GM12878 (cell line): ENCODE measurements at regions of chr3 and their contacts with region 1.

Region 1: DNA sequence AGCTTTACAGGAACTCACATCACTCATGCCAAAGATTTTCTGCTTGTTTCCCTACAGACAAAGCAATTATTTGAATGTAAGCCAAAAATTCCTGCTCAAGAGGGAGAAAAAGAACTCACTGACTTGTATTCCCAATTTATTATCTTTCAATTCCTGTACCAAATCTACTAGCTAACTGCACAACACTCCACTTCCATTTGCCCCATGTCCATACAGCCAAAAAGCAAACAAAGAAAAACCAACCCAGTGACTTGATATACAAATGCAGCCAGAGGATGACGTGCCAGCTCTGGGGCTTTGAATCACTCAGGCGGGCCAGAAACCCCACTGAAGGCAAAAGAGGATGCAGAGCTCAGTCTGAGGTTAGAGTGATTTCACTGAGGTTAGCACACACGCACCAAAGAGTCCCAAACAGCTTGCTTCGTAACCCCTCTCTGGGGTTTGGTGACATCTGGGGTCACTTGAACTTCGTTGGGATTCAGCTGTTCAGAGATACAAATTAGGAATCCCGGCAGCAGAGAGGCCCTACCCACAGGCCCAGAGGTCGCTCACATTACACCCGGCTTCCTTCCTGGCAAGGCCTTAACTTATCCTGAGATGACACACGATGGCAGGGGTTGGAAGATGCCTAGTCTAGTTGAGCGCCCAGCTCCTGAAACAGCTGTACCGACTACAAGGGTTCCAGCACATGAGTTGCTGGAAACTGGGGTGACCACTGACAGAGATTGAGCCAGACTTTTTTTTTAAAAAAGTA is 1.6 kb downstream of the RFTN1 start:
- DNase-seq: peak; percentile 98
- ATAC-seq: peak; percentile 48
- H3K4me3 ChIP-seq: peak overlapping the region; percentile 86
- H3K27ac ChIP-seq: peak overlapping the region; percentile 92
- H3K4me1 ChIP-seq: peaks cover 37% of the 10 kb centered on the region
- H3K27me3 ChIP-seq: no peaks in the 10 kb centered on the region
- CTCF ChIP-seq: peak in 1 of 3 experiments; percentile 0; a peak in 1 of 6 replicates
- EP300 ChIP-seq: peak; percentile 99
- POLR2A ChIP-seq: peak; percentile 64
- RAD21 ChIP-seq: peak; percentile 8; the same call in 1 of the 2 replicates

Region 2: GRCh38 chr3:15361494-15362212 is 1150.2 kb before region 1 on chr3:
- CTCF ChIA-PET with region 1: no interaction called
- POLR2A ChIA-PET with region 1: no interaction called
- RAD21 ChIA-PET with region 1: no interaction called
- SMC1A ChIA-PET with region 1: no interaction called
- in situ Hi-C with region 1: loop called (anchors 25 kb)
- intact Hi-C with region 1: loop called (anchors 5 kb)
- DNase-seq: peak; percentile 99
- ATAC-seq: peak; percentile 82
- H3K4me3 ChIP-seq: peak overlapping the region; percentile 40; the same call in 1 of the 2 replicates
- H3K27ac ChIP-seq: peak overlapping the region; percentile 84
- H3K4me1 ChIP-seq: peaks cover 47% of the 10 kb centered on the region
- H3K27me3 ChIP-seq: no peaks in the 10 kb centered on the region
- CTCF ChIP-seq: no peak
- EP300 ChIP-seq: peak in 1 of 2 experiments; percentile 98
- POLR2A ChIP-seq: peak; percentile 63
- RAD21 ChIP-seq: peak; percentile 2

Region 3: GRCh38 chr3:16264708-16265454 is 247.0 kb before region 1 on chr3 and contains the starts of genes DPH3 and OXNAD1:
- CTCF ChIA-PET with region 1: interaction called, 12 read pairs
- POLR2A ChIA-PET with region 1: interaction called, 8 read pairs
- RAD21 ChIA-PET with region 1: interaction called, 4 read pairs
- SMC1A ChIA-PET with region 1: interaction called, 5 read pairs
- in situ Hi-C with region 1: no loop called
- intact Hi-C with region 1: loop called (anchors 2 kb)
- DNase-seq: peak; percentile 95
- ATAC-seq: peak; percentile 98
- H3K4me3 ChIP-seq: peak within 1 kb of the TSS; percentile 91
- H3K27ac ChIP-seq: peak within 1 kb of the TSS; percentile 86
- H3K4me1 ChIP-seq: peaks cover 3% of the 10 kb centered on the region
- H3K27me3 ChIP-seq: no peaks in the 10 kb centered on the region
- CTCF ChIP-seq: no peak
- EP300 ChIP-seq: no peak
- POLR2A ChIP-seq: peak; percentile 58
- RAD21 ChIP-seq: no peak
- polyA plus RNA-seq, gene DPH3: 67.1 to 71.8 TPM
- polyA plus RNA-seq, gene OXNAD1: 5.6 to 6.9 TPM

Region 4: GRCh38 chr3:16378920-16379319 is 132.9 kb before region 1 on chr3:
- CTCF ChIA-PET with region 1: interaction called, 7 read pairs
- POLR2A ChIA-PET with region 1: interaction called, 66 read pairs
- RAD21 ChIA-PET with region 1: interaction called, 52 read pairs
- SMC1A ChIA-PET with region 1: interaction called, 125 read pairs
- in situ Hi-C with region 1: loop called (anchors 5 kb)
- intact Hi-C with region 1: no loop called
- DNase-seq: no peak
- ATAC-seq: peak; percentile 70
- H3K4me3 ChIP-seq: no peak overlapping the region
- H3K27ac ChIP-seq: peak overlapping the region; percentile 88
- H3K4me1 ChIP-seq: peaks cover 93% of the 10 kb centered on the region
- H3K27me3 ChIP-seq: no peaks in the 10 kb centered on the region
- CTCF ChIP-seq: no peak
- EP300 ChIP-seq: peak in 1 of 2 experiments; percentile 82; a peak in 2 of 4 replicates
- POLR2A ChIP-seq: 0 out of 2 replicates have a peak, but pooled peaks have one; percentile 34
- RAD21 ChIP-seq: no peak

Region 5: DNA sequence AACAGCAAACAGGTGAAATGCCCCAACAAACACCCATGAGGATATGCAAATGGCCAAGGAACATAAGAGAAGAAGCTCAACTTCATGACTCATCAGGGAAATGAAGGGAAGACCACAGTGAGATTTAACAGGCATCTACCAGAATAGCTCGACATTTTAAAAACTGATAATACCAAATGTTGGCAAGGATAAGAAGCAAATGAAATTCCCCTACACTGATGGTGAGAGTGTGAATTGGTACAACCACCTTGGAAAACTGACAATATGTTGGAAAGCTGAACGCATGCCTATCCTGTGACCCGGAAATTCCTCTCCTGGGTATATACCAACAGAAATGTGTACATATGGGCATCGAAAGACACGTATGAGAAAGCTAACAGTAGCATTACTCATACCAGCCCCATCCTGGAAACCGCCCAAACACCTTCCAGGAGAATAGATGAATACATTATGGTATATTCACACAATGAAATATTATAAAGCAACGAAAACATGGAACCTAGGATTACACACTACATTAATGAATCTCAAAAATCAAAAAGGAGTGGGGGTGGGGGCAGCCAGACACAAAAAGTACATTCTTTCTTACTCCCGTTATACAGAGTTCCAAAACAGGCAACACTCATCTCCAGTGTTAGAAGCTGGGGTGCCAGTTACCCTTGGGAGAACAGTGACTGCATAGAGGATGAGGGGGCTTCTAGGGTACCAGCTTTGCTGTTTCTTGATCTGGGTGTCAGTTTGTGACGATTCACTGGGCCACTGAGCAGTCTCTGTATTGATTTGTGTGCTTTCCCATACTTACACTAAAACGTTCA is 15.2 kb before region 1 on chr3:
- CTCF ChIA-PET with region 1: interaction called, 8 read pairs
- POLR2A ChIA-PET with region 1: interaction called, 47 read pairs
- RAD21 ChIA-PET with region 1: interaction called, 70 read pairs
- SMC1A ChIA-PET with region 1: interaction called, 83 read pairs
- in situ Hi-C with region 1: no loop called
- intact Hi-C with region 1: no loop called
- DNase-seq: peak; percentile 60
- ATAC-seq: peak; percentile 73
- H3K4me3 ChIP-seq: no peak overlapping the region
- H3K27ac ChIP-seq: peak overlapping the region; percentile 29; the same call in 1 of the 2 replicates
- H3K4me1 ChIP-seq: peaks cover 48% of the 10 kb centered on the region
- H3K27me3 ChIP-seq: no peaks in the 10 kb centered on the region
- CTCF ChIP-seq: no peak
- EP300 ChIP-seq: no peak
- POLR2A ChIP-seq: no peak
- RAD21 ChIP-seq: no peak

Region 6: DNA sequence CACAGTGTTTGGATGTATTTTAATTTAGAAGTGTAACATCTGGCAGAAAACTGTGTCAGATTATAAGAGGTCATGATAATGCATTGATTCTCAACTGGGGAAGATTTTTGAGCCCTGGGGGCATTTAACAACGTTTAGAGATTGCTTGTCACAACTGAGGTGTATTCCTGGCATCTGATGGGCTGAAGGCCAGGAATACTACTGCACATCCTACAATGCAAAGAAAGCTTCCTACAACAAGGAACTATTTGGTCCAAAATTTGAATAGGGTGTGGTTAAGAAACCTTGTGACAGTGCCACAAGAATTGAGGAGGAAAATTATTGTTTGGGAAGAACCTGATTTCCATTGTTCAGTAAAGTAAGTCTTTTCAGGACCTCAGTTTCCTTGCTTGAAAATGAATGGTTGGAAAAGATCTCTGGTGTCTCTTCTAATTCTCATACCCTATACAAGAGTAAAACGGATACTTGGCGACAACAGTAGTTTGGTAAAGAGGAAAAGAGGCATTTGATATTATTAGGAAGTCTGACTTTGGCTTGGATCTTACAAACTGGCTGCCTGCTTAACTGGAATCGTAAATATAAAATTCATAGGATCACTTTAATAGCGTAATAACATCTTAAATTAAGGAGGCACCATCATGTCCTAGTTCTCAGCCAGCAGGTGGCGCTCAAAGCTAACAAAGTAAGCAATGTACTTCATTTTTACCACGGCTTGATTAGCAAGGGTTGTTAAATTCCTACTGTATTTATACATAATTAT is 89.1 kb after region 1 on chr3:
- CTCF ChIA-PET with region 1: no interaction called
- POLR2A ChIA-PET with region 1: interaction called, 3 read pairs
- RAD21 ChIA-PET with region 1: no interaction called
- SMC1A ChIA-PET with region 1: no interaction called
- in situ Hi-C with region 1: no loop called
- intact Hi-C with region 1: loop called (anchors 5 kb)
- DNase-seq: no peak
- ATAC-seq: peak; percentile 86
- H3K4me3 ChIP-seq: no peak overlapping the region
- H3K27ac ChIP-seq: no peak overlapping the region
- H3K4me1 ChIP-seq: peaks cover 7% of the 10 kb centered on the region
- H3K27me3 ChIP-seq: no peaks in the 10 kb centered on the region
- CTCF ChIP-seq: peak; percentile 56 to 81 (median 69)
- EP300 ChIP-seq: no peak
- POLR2A ChIP-seq: no peak
- RAD21 ChIP-seq: peak; percentile 96